ENCODE measurements at regions of chr2 and their contacts with region 1.

Region 1: DNA sequence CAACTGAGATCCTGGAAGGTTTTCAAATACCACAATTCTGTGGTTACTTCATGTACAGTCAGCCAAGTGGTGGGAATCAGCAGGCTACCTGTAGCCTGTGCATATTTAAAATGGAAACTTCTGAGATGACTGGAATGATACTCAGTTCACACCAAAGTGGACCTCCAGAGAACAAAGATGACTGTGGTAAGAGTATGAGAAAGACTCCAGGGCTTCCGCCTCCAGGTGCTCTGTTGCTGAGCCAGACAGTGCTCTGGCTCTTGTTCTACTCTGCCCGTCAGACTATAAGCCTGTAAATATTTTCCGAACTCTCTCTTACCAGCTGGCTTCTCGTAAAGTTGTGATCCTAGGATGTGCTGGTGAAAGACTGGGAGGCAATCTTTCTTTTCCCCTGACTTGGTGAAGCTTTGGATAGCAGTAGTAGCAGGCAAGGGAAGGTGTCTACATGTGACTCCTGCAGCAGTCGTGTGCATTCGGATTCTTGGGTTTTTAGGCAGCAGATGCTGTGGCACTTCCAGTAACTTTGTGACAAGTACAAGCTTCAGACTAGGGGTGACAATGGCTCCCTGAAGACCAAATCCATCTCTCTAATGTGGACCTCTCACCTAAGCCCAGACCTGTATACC is 23.1 kb downstream of the ST3GAL5 start:
- DNase-seq: peak; percentile 71
- H3K4me3 Mint-ChIP-seq: no peak overlapping the region
- H3K27ac Mint-ChIP-seq: no peak overlapping the region
- H3K4me1 Mint-ChIP-seq: peaks cover 60% of the 10 kb centered on the region
- H3K27me3 Mint-ChIP-seq: no peaks in the 10 kb centered on the region

Region 2: DNA sequence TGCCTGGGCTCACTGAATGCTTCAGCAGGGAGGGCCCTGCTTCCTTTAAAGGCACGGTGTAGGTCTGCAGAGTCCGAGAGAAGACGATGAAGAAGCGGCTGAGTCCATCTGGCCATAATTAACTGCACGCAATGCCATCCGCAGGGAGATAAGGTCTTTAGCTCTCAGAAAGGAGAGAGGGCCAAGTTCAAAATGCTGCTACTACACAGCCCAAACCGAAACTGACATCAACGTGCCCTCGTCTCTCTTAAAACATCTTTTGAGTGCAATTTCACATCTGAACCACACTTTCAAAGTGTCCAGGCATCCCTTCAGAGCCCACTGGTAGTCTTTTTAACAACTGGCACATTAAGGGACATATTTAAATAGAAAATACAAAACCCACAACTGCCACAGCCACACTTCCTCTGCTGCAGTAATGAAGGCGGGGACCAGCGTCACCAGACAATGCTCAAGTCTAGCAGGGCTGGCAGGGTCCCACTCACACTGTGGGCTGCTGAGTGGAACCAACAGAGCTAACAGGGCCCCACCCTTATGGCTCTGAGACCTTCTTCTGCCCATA is 12.6 kb before region 1 on chr2:
- CTCF ChIA-PET with region 1: interaction called, 4 read pairs
- POLR2A ChIA-PET with region 1: interaction called, 3 read pairs
- intact Hi-C with region 1: loop called (anchors 2 kb)
- DNase-seq: peak; percentile 69
- H3K4me3 Mint-ChIP-seq: peak overlapping the region; percentile 77
- H3K27ac Mint-ChIP-seq: peak overlapping the region; percentile 98
- H3K4me1 Mint-ChIP-seq: peaks cover 71% of the 10 kb centered on the region
- H3K27me3 Mint-ChIP-seq: no peaks in the 10 kb centered on the region

Region 3: DNA sequence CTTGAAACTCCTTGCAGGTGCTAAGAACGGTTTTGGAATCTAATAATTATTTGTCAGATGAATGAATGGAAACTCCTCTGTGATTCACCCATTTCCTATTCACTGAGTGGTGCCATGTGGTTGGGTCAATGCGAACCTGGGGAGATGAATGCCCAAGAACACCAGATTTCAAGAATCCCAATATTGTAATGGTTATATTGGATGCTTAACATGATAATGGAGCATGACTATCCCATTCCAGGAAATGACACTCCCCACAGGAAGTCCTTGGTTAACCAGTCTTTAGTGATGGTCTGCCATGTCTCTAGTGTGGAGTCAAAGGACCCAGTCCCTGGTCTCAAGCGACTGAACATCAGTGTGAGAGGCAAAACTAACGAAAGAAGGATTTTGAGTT is 91.0 kb after region 1 on chr2:
- CTCF ChIA-PET with region 1: no interaction called
- POLR2A ChIA-PET with region 1: no interaction called
- intact Hi-C with region 1: no loop called
- DNase-seq: no peak
- H3K4me3 Mint-ChIP-seq: no peak overlapping the region
- H3K27ac Mint-ChIP-seq: no peak overlapping the region
- H3K4me1 Mint-ChIP-seq: no peaks in the 10 kb centered on the region
- H3K27me3 Mint-ChIP-seq: no peaks in the 10 kb centered on the region